ENCODE measurements at regions of chr9 and their contacts with region 1.

Region 1: GRCh38 chr9:94917840-94918753 is 191.6 kb downstream of the AOPEP start:
- DNase-seq: peak in 4 of 14 experiments; percentile 9 to 45 (median 28)
- ATAC-seq: peak; percentile 54
- H3K4me3 ChIP-seq: no peak overlapping the region
- H3K4me3 Mint-ChIP-seq: no peak overlapping the region
- H3K27ac ChIP-seq: no peak overlapping the region
- H3K27ac Mint-ChIP-seq: no peak overlapping the region
- H3K4me1 ChIP-seq: no peaks in the 10 kb centered on the region
- H3K4me1 Mint-ChIP-seq: no peaks in the 10 kb centered on the region
- H3K27me3 ChIP-seq: no peaks in the 10 kb centered on the region
- H3K27me3 Mint-ChIP-seq: no peaks in the 10 kb centered on the region
- CTCF ChIP-seq: no peak

Region 2: DNA sequence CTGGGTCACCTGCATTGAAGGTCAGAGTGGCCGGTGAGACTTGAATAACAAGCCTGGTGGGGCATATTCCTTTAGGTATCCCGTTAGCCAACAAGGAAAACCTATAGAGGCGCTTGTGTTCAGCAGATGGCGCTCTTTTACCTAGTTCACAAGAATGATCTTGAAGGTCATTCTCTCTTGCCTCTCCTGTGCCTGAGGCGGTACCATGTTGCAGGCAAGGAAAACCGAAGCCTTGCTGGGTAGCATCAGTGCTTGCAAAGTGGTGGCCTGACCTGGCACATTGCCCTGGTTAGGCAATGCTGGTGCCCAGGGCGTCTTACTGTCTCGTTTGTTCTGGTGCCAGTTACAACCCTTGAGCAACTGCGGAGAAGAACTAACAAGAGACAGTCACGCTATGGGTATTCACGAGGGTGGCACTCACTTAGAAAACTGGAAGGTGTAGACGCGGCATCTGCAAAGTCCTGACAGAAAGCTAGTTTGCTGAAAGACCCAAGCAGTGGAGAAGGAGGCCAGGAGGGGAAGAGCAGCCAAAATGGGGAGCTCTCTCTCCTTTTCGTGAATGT is 134.9 kb before region 1 on chr9:
- CTCF ChIA-PET with region 1: no interaction called
- POLR2A ChIA-PET with region 1: no interaction called
- intact Hi-C with region 1: loop called (anchors 1 to 2 kb)
- DNase-seq: peak in 13 of 14 experiments; percentile 3 to 66 (median 25)
- ATAC-seq: no peak
- H3K4me3 ChIP-seq: no peak overlapping the region
- H3K4me3 Mint-ChIP-seq: no peak overlapping the region
- H3K27ac ChIP-seq: no peak overlapping the region
- H3K27ac Mint-ChIP-seq: no peak overlapping the region
- H3K4me1 ChIP-seq: peaks cover 3% of the 10 kb centered on the region
- H3K4me1 Mint-ChIP-seq: peaks cover 13% of the 10 kb centered on the region
- H3K27me3 ChIP-seq: no peaks in the 10 kb centered on the region
- H3K27me3 Mint-ChIP-seq: no peaks in the 10 kb centered on the region
- CTCF ChIP-seq: peak; percentile 72

Region 3: GRCh38 chr9:94829380-94830070 is 88.6 kb before region 1 on chr9:
- CTCF ChIA-PET with region 1: no interaction called
- POLR2A ChIA-PET with region 1: no interaction called
- intact Hi-C with region 1: no loop called
- DNase-seq: no peak
- ATAC-seq: no peak
- H3K4me3 ChIP-seq: no peak overlapping the region
- H3K4me3 Mint-ChIP-seq: no peak overlapping the region
- H3K27ac ChIP-seq: no peak overlapping the region
- H3K27ac Mint-ChIP-seq: no peak overlapping the region
- H3K4me1 ChIP-seq: no peaks in the 10 kb centered on the region
- H3K4me1 Mint-ChIP-seq: no peaks in the 10 kb centered on the region
- H3K27me3 ChIP-seq: no peaks in the 10 kb centered on the region
- H3K27me3 Mint-ChIP-seq: no peaks in the 10 kb centered on the region
- CTCF ChIP-seq: no peak

Region 4: GRCh38 chr9:94870793-94871558 is 47.1 kb before region 1 on chr9:
- CTCF ChIA-PET with region 1: no interaction called
- POLR2A ChIA-PET with region 1: no interaction called
- intact Hi-C with region 1: loop called in 1 of 2 experiments (anchors 5 kb)
- DNase-seq: peak in 12 of 14 experiments; percentile 9 to 91 (median 36)
- ATAC-seq: peak; percentile 89
- H3K4me3 ChIP-seq: no peak overlapping the region
- H3K4me3 Mint-ChIP-seq: peak overlapping the region; percentile 76
- H3K27ac ChIP-seq: peak overlapping the region; percentile 42 to 45
- H3K27ac Mint-ChIP-seq: peak overlapping the region; percentile 80
- H3K4me1 ChIP-seq: peaks cover 25% of the 10 kb centered on the region
- H3K4me1 Mint-ChIP-seq: peaks cover 30% of the 10 kb centered on the region
- H3K27me3 ChIP-seq: no peaks in the 10 kb centered on the region
- H3K27me3 Mint-ChIP-seq: no peaks in the 10 kb centered on the region
- CTCF ChIP-seq: no peak

Region 5: DNA sequence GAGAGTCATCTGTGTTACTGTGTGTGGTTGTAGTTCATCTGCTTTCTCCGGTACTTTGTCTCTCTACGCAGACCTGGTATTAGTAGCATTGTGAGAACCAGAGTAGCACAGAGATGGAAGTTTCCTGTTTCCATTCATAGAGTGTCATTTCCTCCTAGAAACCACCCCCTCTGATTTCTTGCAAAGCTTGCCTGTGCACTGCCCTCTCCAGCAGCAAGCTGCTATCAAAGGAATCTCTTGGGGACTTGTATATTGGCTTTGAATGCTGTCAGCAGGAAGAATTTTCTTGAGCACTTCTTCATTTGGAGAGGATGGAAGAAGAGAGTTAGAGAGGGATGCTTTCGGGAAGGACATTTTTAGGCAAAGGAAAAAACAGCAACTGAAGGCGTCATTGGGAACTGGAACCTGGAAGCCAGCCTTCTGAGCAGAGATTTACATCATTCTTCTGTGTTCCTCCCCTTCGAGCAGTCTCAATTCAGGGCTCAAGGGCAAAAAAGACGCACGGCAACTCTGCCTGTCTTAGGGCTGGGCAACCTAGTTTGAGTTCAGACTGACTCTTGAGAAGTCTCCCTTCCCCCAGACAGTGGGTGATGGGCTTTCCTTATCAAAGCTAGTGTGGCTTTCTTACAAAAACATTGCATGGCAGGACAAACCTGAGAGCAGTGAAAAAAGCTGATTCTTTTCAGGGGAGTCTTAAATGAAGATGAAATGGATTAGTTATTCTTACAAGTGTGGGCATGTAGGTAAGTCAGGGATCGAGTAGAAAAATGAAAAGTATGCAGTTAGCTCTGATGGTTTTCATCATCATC is 34.7 kb after region 1 on chr9:
- CTCF ChIA-PET with region 1: no interaction called
- POLR2A ChIA-PET with region 1: no interaction called
- intact Hi-C with region 1: no loop called
- DNase-seq: peak in 5 of 14 experiments; percentile 3 to 54 (median 18)
- ATAC-seq: peak; percentile 94
- H3K4me3 ChIP-seq: no peak overlapping the region
- H3K4me3 Mint-ChIP-seq: peak overlapping the region; percentile 30
- H3K27ac ChIP-seq: no peak overlapping the region
- H3K27ac Mint-ChIP-seq: peak overlapping the region; percentile 38
- H3K4me1 ChIP-seq: peaks cover 27% of the 10 kb centered on the region
- H3K4me1 Mint-ChIP-seq: peaks cover 41% of the 10 kb centered on the region
- H3K27me3 ChIP-seq: no peaks in the 10 kb centered on the region
- H3K27me3 Mint-ChIP-seq: no peaks in the 10 kb centered on the region
- CTCF ChIP-seq: no peak

Measured in CD4-positive, alpha-beta T cell (primary cell).